ENCODE measurements at regions of chr13 and their contacts with region 1.

Region 1: GRCh38 chr13:50529154-50529882 is 314.2 kb downstream of the DLEU7 start:
- DNase-seq: peak; percentile 78
- H3K4me3 ChIP-seq: no peak overlapping the region
- H3K27ac ChIP-seq: peak overlapping the region in 4 of 8 donors; percentile 11 to 54 (median 36)
- H3K4me1 ChIP-seq: peaks cover 0 to 36% (median 24%) of the 10 kb centered on the region in 6 donors
- H3K27me3 ChIP-seq: no peaks in the 10 kb centered on the region
- CTCF ChIP-seq: no peak
- POLR2A ChIP-seq: no peak

Region 2: GRCh38 chr13:49985129-49985528 is 544.2 kb before region 1 on chr13:
- intact Hi-C with region 1: loop called (anchors 10 kb)
- DNase-seq: no peak
- H3K4me3 ChIP-seq: no peak overlapping the region
- H3K27ac ChIP-seq: no peak overlapping the region
- H3K4me1 ChIP-seq: no peaks in the 10 kb centered on the region
- H3K27me3 ChIP-seq: no peaks in the 10 kb centered on the region
- CTCF ChIP-seq: no peak
- POLR2A ChIP-seq: no peak

Region 3: DNA sequence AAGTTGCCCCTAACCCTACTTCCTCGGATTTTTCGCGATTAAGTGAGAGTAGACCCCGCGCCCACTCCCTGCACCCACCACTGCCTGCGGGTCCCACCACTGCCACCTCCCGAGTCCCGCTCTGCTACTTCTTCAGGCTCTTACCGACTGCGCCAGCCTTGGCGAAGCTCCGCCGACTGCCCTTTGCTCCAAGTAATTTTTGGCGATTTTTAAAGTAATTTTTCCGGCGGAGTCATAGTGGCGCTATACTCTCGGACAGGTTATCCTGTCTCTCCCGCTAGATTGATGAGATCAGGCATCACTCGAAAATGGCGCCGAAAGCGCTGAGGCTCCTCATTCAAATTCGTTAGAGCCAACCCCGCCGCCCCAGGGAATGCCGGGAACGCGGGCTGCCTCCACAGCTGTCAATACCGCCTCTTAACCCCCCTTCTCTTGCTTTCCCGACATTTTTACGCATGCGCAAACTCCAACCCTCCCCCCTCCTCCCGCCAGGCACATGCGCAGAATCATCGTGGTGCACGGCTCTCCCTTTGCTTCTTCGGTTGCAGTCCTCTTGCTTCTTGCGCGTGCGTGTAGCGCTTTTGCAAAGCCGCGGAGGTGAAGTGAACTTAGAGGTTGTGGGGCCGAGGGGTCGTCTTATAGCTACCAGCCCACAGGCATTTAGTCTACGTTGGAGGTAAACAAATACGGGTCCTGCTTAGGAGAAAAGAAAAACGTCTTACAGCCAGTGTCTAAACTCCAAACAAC is 447.5 kb before region 1 on chr13:
- intact Hi-C with region 1: loop called (anchors 5 kb)
- DNase-seq: peak; percentile 99
- H3K4me3 ChIP-seq: peak overlapping the region; percentile 66 to 91 (median 82)
- H3K27ac ChIP-seq: peak overlapping the region; percentile 79 to 95 (median 92)
- H3K4me1 ChIP-seq: peaks cover 22 to 88% (median 70%) of the 10 kb centered on the region in 6 donors
- H3K27me3 ChIP-seq: no peaks in the 10 kb centered on the region
- CTCF ChIP-seq: peak in 3 of 11 experiments; percentile 5 to 9 (median 9)
- POLR2A ChIP-seq: peak in 2 of 3 donors; percentile 3 to 5

Region 4: GRCh38 chr13:50801087-50801931 is 272.0 kb after region 1 on chr13:
- intact Hi-C with region 1: loop called (anchors 10 kb)
- DNase-seq: no peak
- H3K4me3 ChIP-seq: peak overlapping the region in 1 of 8 donors; percentile 36
- H3K27ac ChIP-seq: peak overlapping the region in 6 of 8 donors; percentile 21 to 73 (median 50)
- H3K4me1 ChIP-seq: peaks cover 7 to 36% (median 32%) of the 10 kb centered on the region in 6 donors
- H3K27me3 ChIP-seq: no peaks in the 10 kb centered on the region
- CTCF ChIP-seq: peak; percentile 53 to 86 (median 81)
- POLR2A ChIP-seq: no peak

Region 5: DNA sequence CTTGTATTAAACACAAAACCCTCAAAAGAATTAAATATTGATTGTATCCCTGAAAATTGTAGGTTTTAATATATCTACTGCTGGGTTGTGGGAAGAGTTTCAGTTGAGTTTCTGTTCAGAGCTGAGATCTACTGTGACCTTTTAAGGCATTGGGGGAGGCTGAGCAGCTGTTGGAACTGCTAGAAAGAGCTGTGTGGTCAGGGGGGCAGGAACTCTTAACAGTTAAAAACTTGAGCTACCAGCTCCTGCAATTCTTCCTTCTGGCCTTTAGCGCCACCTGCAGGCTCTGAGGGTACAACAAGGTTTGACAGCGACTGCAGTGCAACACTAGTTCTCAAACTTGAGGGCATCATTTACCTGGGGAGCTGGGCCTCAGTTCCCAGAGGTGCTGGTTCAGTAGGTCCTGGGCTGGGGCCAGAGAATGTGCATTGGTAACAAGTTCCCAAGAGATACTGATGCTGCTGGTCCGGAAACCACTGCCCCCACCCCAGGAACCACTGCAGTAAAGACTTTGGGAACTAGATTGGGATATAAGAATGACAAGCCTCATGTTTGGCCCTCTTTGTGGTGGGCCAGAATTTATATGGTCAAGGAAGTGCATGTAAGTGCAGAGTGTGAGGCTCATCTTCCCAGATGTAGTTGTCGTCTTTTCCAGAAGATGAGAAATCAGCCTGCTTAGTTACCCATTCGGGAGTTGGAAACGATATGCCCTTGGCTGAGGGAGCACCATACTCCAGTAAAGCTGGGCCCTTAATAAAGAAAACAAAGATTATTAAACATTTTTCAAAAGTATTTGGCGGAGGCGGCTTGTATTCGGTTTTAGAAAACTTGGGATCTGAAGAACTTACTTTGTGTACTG is 382.8 kb after region 1 on chr13:
- intact Hi-C with region 1: loop called (anchors 5 kb)
- DNase-seq: peak; percentile 96
- H3K4me3 ChIP-seq: peak overlapping the region in 5 of 8 donors; percentile 73 to 90 (median 85)
- H3K27ac ChIP-seq: peak overlapping the region in 7 of 8 donors; percentile 96 to 98 (median 97)
- H3K4me1 ChIP-seq: peaks cover 48 to 90% (median 73%) of the 10 kb centered on the region in 6 donors
- H3K27me3 ChIP-seq: no peaks in the 10 kb centered on the region
- CTCF ChIP-seq: peak; percentile 76 to 93 (median 88)
- POLR2A ChIP-seq: peak in 1 of 3 donors; percentile 11

Measured in spleen (tissue), 13 donors.